B cell (primary cell): ENCODE measurements at regions of chr15 and their contacts with region 1.

Region 1: GRCh38 chr15:66851226-66852071 is 149.4 kb downstream of the SMAD6 start:
- DNase-seq: peak; percentile 84
- ATAC-seq: peak; percentile 98
- H3K4me3 ChIP-seq: peak overlapping the region in 1 of 5 experiments; percentile 6
- H3K4me3 Mint-ChIP-seq: peak overlapping the region; percentile 49
- H3K27ac ChIP-seq: no peak overlapping the region
- H3K27ac Mint-ChIP-seq: no peak overlapping the region
- H3K4me1 ChIP-seq: peaks cover 7 to 11% of the 10 kb centered on the region in 2 donors
- H3K4me1 Mint-ChIP-seq: peaks cover 11% of the 10 kb centered on the region
- H3K27me3 ChIP-seq: peaks cover 0 to 12% (median 4%) of the 10 kb centered on the region in 4 experiments
- H3K27me3 Mint-ChIP-seq: peaks cover 12% of the 10 kb centered on the region
- CTCF ChIP-seq: peak; percentile 99

Region 2: GRCh38 chr15:66603301-66604179 is 247.9 kb before region 1 on chr15:
- CTCF ChIA-PET with region 1: interaction called, 83 read pairs
- POLR2A ChIA-PET with region 1: no interaction called
- intact Hi-C with region 1: no loop called
- DNase-seq: peak; percentile 75
- ATAC-seq: peak; percentile 47
- H3K4me3 ChIP-seq: no peak overlapping the region
- H3K4me3 Mint-ChIP-seq: no peak overlapping the region
- H3K27ac ChIP-seq: no peak overlapping the region
- H3K27ac Mint-ChIP-seq: no peak overlapping the region
- H3K4me1 ChIP-seq: no peaks in the 10 kb centered on the region
- H3K4me1 Mint-ChIP-seq: no peaks in the 10 kb centered on the region
- H3K27me3 ChIP-seq: peaks cover 0 to 7% (median 0%) of the 10 kb centered on the region in 4 experiments
- H3K27me3 Mint-ChIP-seq: peaks cover 14% of the 10 kb centered on the region
- CTCF ChIP-seq: peak; percentile 82

Region 3: GRCh38 chr15:66619151-66619903 is 232.1 kb before region 1 on chr15:
- CTCF ChIA-PET with region 1: interaction called, 26 read pairs
- POLR2A ChIA-PET with region 1: no interaction called
- intact Hi-C with region 1: no loop called
- DNase-seq: peak; percentile 56
- ATAC-seq: peak; percentile 51
- H3K4me3 ChIP-seq: no peak overlapping the region
- H3K4me3 Mint-ChIP-seq: no peak overlapping the region
- H3K27ac ChIP-seq: no peak overlapping the region
- H3K27ac Mint-ChIP-seq: no peak overlapping the region
- H3K4me1 ChIP-seq: peaks cover 25 to 28% of the 10 kb centered on the region in 2 donors
- H3K4me1 Mint-ChIP-seq: peaks cover 31% of the 10 kb centered on the region
- H3K27me3 ChIP-seq: peaks cover 0 to 31% (median 15%) of the 10 kb centered on the region in 4 experiments
- H3K27me3 Mint-ChIP-seq: peaks cover 33% of the 10 kb centered on the region
- CTCF ChIP-seq: peak; percentile 73

Region 4: DNA sequence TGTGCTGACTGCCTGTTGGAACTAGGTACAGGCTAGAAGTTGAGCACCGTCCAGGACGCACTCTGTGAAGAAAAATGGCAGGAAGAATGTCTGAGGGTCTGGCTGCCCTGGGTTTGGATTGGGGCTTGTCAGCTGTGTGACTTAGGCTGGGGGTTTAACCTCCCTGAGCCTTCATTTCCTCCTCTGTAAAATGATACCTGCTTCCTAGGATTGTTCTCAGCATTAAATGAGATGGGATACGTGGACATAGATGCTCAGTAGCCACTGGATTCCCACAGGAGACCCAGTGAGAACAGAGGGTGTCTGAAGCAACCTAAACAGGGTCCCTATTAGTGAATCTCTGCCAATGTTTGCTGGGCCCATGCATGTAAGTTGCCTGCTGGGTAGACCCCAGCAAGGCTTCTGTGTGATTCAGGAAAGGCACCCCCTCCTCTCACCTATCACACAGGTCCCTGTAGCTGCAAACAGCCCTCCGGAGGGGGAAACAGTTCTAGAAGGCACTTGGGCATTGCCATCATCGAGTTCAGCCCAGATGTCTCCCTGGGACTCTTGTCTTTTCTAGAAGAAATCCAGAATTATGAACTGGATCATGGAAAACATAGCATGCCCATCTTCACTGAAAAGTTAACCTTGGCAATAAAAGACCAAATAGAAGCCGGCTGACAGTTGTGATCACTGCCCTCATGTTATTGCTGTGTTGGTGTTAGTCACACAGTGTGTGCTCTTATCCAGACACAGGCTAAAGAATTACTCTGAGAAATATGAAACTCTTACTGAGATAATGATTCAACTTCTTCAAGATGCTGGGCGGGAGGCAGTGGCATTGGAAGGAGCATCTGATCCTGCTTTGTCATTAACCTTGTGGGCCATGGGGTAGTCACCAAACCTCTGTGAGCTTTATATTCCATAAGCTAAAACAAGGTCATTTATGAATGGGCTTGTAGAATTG is 84.9 kb before region 1 on chr15:
- CTCF ChIA-PET with region 1: interaction called, 15 read pairs
- POLR2A ChIA-PET with region 1: no interaction called
- intact Hi-C with region 1: loop called (anchors 5 kb)
- DNase-seq: no peak
- ATAC-seq: no peak
- H3K4me3 ChIP-seq: no peak overlapping the region
- H3K4me3 Mint-ChIP-seq: no peak overlapping the region
- H3K27ac ChIP-seq: no peak overlapping the region
- H3K27ac Mint-ChIP-seq: no peak overlapping the region
- H3K4me1 ChIP-seq: peaks cover 4 to 5% of the 10 kb centered on the region in 2 donors
- H3K4me1 Mint-ChIP-seq: peaks cover 6% of the 10 kb centered on the region
- H3K27me3 ChIP-seq: peaks cover 0 to 35% (median 13%) of the 10 kb centered on the region in 4 experiments
- H3K27me3 Mint-ChIP-seq: peaks cover 44% of the 10 kb centered on the region
- CTCF ChIP-seq: no peak

Region 5: DNA sequence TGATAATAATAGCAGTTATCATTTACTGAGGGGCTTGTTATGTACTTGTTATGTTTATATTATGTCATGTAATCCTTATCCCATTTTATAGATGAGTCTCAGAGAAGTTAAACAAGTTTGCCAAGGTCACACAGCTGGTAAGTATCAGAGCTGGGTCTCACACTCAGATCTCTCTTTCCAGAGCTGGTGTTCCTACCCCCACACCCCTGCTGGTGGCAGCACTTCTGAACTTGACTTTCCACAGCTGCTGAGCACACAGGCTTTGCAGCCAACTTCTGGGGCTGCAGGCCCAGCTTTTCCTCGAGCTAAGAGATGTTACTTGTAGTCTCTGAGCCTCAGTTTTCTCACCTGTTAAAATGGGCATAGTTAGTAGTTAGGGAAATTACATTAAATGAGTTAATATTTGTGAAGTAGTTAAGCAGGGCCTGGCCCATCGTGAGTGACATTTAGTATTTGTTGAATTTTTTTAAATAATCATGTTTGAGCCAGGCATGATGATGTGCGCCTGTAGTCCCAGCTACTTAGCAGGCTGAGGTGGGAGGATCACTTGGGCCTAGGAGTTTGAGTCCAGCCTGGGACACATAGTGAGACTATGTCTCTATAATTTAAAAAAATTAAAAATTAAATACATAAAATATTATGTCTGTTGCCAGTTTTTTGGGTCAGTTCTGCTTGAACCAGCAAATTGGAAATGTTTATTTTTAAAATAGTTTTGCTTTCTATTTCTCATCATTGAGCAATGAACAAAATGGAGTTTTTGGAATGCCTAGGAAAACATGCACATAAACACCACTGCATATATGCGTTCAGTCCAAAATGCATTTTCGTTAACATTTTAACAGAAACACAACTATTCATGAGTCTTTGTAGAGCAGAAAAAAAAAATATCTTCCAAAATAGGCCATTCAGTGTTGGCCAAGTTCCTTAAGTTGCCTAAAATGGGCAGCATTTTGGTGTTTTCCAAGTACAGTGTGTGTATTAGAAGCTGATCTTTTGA is 62.1 kb before region 1 on chr15:
- CTCF ChIA-PET with region 1: interaction called, 30 read pairs
- POLR2A ChIA-PET with region 1: no interaction called
- intact Hi-C with region 1: loop called (anchors 1 kb)
- DNase-seq: peak; percentile 30
- ATAC-seq: no peak
- H3K4me3 ChIP-seq: no peak overlapping the region
- H3K4me3 Mint-ChIP-seq: no peak overlapping the region
- H3K27ac ChIP-seq: no peak overlapping the region
- H3K27ac Mint-ChIP-seq: no peak overlapping the region
- H3K4me1 ChIP-seq: no peaks in the 10 kb centered on the region
- H3K4me1 Mint-ChIP-seq: no peaks in the 10 kb centered on the region
- H3K27me3 ChIP-seq: no peaks in the 10 kb centered on the region
- H3K27me3 Mint-ChIP-seq: no peaks in the 10 kb centered on the region
- CTCF ChIP-seq: no peak

Region 6: DNA sequence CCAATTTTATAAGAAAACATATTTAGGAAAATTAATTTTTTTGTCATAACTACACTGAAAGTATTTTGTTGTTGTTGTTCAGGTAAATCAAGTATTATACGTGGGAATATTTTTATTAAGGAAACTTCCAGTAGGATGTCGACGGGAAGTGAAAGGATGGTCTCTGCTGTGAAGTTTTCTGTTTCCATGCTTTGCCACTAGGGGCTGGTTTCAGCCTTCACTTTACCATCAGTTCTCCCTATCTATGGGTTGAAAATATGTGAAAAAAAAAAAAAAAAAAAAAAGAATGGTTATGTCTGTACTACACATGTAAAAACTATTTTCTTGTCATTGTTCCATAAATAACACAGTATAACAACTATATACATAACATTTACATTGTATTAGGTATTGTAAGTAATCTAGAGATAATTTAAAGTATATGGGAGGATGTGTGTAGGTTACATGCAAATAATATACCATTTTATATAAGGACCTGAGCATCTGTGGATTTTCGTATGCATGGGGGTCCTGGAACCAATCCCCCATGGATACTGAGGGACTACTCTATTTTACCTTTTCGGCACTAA is 12.7 kb before region 1 on chr15:
- CTCF ChIA-PET with region 1: interaction called, 80 read pairs
- POLR2A ChIA-PET with region 1: interaction called, 6 read pairs
- intact Hi-C with region 1: no loop called
- DNase-seq: peak; percentile 36
- ATAC-seq: no peak
- H3K4me3 ChIP-seq: no peak overlapping the region
- H3K4me3 Mint-ChIP-seq: no peak overlapping the region
- H3K27ac ChIP-seq: no peak overlapping the region
- H3K27ac Mint-ChIP-seq: no peak overlapping the region
- H3K4me1 ChIP-seq: peaks cover 29 to 35% of the 10 kb centered on the region in 2 donors
- H3K4me1 Mint-ChIP-seq: peaks cover 40% of the 10 kb centered on the region
- H3K27me3 ChIP-seq: peaks cover 0 to 26% (median 14%) of the 10 kb centered on the region in 4 experiments
- H3K27me3 Mint-ChIP-seq: peaks cover 22% of the 10 kb centered on the region
- CTCF ChIP-seq: peak; percentile 69

Region 7: DNA sequence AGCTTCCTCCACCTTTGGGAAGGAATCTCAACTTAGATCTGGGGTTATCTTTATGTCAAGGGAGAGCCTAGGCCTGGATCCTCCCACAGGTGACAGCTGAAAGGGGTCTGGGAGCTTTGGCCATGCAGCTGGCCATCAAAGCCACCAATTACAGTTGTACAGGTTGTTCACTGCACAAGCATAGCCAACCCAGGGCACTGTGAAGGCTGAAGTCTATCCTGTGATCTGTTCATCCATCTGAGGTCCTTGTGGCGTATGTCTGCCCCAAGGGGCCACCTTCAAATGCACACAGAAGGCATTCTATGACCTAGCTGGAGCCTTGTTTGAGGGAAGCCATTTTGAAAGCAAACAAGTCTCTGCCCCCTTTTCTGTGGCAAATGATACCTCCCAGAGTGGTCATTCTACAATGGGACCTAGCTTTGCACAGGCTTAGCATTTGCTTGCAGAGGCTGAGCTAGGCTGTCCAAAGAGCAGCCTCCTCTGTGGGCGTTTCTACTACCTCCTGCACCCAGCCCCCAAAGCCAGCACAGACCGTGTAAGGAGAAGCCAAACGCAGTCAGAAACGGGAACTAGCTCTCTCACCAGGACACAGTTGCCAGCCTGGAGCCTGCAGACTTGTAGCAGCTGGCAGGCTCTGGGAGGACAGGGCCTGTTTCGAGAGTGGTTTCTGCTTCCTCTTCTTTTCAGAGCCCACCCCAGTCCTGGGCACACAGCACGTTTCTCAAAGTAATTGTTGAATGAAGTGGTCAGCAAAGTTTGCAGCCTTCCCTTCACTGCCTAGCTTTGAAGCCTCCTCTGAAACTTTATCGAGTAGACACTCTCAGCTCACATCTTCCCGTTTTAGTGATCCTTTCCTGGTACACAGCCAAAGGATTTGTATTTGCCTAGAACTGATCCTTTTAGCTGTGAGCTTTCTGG is 56.6 kb after region 1 on chr15:
- CTCF ChIA-PET with region 1: interaction called, 10 read pairs
- POLR2A ChIA-PET with region 1: no interaction called
- intact Hi-C with region 1: no loop called
- DNase-seq: peak; percentile 71
- ATAC-seq: peak; percentile 67
- H3K4me3 ChIP-seq: peak overlapping the region in 1 of 5 experiments; percentile 3
- H3K4me3 Mint-ChIP-seq: no peak overlapping the region
- H3K27ac ChIP-seq: peak overlapping the region in 1 of 2 donors; percentile 32
- H3K27ac Mint-ChIP-seq: peak overlapping the region; percentile 73
- H3K4me1 ChIP-seq: peaks cover 22 to 23% of the 10 kb centered on the region in 2 donors
- H3K4me1 Mint-ChIP-seq: peaks cover 38% of the 10 kb centered on the region
- H3K27me3 ChIP-seq: no peaks in the 10 kb centered on the region
- H3K27me3 Mint-ChIP-seq: peaks cover 12% of the 10 kb centered on the region
- CTCF ChIP-seq: no peak